AG04450 (cell line): ENCODE measurements at regions of chr1 and their contacts with region 1.

Region 1: DNA sequence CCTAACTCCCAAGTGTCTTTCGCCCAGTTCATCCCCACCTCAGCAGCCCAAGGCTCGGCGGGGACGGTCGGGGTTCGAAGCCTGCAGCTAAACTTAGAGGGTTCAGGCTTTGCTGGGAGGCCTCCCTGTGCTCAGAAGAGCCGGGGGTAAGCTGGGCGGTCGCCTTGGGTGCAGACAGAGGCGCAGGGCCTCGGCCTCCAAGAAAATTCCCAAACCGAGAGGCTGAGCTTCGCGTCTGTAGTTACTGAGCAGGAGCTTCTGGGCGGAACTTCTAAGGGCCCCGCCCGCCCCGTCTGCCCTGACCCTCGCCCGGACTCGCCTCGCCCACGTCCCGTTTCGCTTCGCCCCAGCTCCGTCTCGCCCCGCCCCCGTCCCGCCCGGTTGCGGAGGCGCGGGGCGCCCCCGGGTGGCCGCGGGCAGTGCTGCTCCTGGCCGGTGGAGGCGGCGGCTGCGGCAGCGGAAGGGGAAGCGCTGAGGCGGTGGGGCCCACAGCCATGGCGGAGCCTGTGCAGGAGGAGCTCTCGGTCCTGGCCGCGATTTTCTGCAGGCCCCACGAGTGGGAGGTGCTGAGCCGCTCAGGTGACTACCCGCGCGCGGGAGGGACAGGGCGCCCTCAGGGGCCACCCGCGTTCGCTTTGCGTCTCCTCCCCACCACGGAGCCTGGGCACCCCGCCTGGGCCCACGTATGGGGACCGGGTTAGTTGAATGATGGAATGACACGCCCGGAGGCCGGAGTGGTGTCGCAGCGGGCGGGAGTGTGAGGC is at the start of gene RWDD3:
- DNase-seq: peak; percentile 61
- H3K4me3 ChIP-seq: peak within 1 kb of the TSS; percentile 83
- H3K27ac ChIP-seq: peak within 1 kb of the TSS; percentile 50
- H3K27me3 ChIP-seq: no peaks in the 10 kb centered on the region
- CTCF ChIP-seq: peak; percentile 58
- polyA plus RNA-seq, gene RWDD3: 17.6 and 24.6 TPM in 2 replicates

Region 2: DNA sequence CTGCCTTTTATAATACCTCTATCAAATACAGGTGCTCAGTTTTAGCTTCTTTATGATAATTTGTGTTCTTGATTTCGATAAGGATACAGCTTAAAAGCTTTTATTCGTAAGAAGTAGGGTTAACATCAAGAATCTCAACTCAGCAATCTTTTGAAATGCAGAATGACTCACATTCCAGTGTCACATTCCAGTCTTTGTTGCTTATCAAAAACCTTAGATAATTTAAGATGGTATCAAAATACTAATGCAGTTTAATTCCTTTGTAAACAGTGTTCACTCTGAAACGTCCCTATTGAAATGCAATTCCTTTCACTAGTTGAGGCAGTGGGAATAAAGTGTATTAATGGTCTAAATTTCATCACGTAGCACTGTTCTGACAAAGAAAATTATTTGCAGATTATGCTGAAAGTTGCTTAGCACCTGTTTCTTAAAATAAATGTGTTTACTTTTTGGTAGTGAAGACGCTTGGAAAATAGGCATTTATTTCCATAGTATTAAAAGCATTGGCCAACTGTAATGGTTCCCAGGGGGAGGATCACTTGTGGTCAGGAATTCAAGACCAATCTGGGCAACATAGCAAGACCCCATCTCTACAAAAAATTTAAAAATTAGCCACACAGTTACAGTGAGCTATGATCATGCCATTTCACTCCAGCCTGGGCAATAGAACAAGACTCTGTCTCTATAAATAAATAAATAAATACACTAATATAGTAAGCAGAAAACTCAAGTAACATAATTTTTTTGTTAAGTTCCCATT is 296.9 kb before region 1 on chr1:
- CTCF ChIA-PET with region 1: no interaction called
- POLR2A ChIA-PET with region 1: no interaction called
- DNase-seq: no peak
- H3K4me3 ChIP-seq: no peak overlapping the region
- H3K27ac ChIP-seq: no peak overlapping the region
- H3K27me3 ChIP-seq: no peaks in the 10 kb centered on the region
- CTCF ChIP-seq: no peak

Region 3: GRCh38 chr1:95058974-95059373 is 174.9 kb before region 1 on chr1:
- CTCF ChIA-PET with region 1: interaction called, 11 read pairs
- POLR2A ChIA-PET with region 1: no interaction called
- DNase-seq: no peak
- H3K4me3 ChIP-seq: no peak overlapping the region
- H3K27ac ChIP-seq: no peak overlapping the region
- H3K27me3 ChIP-seq: no peaks in the 10 kb centered on the region
- CTCF ChIP-seq: no peak

Region 4: GRCh38 chr1:95084317-95085176 is 149.4 kb before region 1 on chr1:
- CTCF ChIA-PET with region 1: interaction called, 23 read pairs
- POLR2A ChIA-PET with region 1: interaction called, 3 read pairs
- DNase-seq: no peak
- H3K4me3 ChIP-seq: no peak overlapping the region
- H3K27ac ChIP-seq: no peak overlapping the region
- H3K27me3 ChIP-seq: peaks cover 6% of the 10 kb centered on the region
- CTCF ChIP-seq: peak; percentile 57

Region 5: DNA sequence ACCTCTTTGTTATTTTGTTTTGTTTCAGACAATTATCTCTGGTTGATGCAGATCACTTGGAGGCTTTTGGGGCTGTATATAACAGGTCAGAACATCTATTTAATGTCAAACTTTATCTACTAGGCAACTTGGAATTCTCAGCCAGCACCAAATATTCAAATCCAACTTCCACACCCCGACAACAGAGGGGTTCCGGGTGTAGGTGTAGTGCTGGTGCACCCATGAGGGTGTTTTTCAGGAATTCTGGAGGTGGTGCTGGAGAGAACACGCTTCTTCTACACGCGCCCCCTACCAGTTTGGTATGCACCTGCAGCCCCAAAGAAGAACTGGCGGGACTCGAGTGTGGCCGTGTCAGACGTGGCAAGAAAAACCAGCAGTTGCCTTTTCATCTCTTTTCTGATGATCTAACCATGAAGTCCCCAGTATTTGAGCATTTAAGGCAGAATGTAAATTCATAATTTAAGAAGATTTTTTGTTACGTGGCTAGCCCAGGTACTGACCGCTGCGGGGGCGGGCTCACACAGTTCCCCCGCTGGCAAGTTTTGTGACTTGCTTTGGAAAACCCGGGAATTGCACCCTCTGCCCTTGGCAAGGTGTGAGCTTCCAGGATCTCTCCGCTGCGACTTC is 117.2 kb before region 1 on chr1:
- CTCF ChIA-PET with region 1: interaction called, 24 read pairs
- POLR2A ChIA-PET with region 1: no interaction called
- DNase-seq: no peak
- H3K4me3 ChIP-seq: peak overlapping the region; percentile 66
- H3K27ac ChIP-seq: no peak overlapping the region
- H3K27me3 ChIP-seq: peaks cover 35% of the 10 kb centered on the region
- CTCF ChIP-seq: peak; percentile 49

Region 6: DNA sequence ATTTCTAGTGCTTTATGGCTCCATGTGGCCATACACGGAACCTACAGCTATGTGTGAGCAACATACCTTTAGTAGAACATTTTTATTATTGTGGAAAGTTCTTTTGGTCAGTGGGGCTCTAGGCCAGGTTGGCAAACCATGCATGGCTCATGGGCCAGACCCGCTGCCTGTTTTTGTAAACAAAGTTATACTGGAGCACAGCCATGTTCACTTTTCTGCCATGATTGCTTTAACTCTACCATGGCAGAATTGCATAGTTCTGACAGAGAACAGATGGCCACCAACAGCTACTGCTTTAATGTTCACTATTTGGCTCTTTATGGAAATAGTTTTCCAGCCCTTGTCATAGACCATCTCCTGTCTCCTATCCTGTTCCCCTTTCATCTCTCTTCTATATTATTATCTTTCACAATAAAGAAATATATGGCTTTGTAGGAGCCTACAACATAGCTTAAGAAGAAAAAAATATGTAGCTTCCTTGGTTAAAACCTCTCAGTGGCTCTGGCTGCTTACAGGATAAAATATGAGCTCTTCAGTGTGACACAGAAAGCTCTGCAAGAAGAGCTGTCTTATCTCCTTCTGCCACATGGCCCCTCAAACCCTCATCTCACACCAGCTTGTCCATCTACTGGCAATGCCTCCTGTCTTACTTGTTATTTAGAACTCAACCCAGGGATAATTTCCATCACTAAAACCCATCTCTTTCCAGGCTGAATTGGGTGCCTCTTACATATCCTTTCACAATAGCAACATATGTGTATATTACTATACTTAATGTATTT is 54.5 kb before region 1 on chr1:
- CTCF ChIA-PET with region 1: interaction called, 18 read pairs
- POLR2A ChIA-PET with region 1: no interaction called
- DNase-seq: no peak
- H3K4me3 ChIP-seq: no peak overlapping the region
- H3K27ac ChIP-seq: no peak overlapping the region
- H3K27me3 ChIP-seq: no peaks in the 10 kb centered on the region
- CTCF ChIP-seq: no peak

Region 7: DNA sequence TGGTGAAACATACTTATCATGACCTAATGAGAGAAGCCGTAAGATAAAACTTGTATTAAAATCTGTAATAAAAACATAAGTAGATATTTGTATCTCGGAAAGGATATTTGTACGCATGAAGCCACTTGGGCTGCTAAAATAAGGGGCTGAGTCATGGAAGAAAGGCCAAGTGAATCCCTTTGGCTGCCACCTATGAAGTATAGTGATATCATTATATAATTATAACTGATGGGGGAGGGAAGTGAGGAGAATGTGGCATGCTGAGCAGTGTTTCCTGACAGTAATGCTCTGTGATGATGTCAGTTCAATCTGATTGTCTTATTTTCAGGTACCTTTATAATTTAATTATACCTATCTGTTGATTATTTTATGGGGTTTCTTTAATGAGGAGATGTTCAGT is 13.7 kb after region 1 on chr1:
- CTCF ChIA-PET with region 1: interaction called, 55 read pairs
- POLR2A ChIA-PET with region 1: no interaction called
- DNase-seq: no peak
- H3K4me3 ChIP-seq: no peak overlapping the region
- H3K27ac ChIP-seq: no peak overlapping the region
- H3K27me3 ChIP-seq: no peaks in the 10 kb centered on the region
- CTCF ChIP-seq: no peak

Region 8: DNA sequence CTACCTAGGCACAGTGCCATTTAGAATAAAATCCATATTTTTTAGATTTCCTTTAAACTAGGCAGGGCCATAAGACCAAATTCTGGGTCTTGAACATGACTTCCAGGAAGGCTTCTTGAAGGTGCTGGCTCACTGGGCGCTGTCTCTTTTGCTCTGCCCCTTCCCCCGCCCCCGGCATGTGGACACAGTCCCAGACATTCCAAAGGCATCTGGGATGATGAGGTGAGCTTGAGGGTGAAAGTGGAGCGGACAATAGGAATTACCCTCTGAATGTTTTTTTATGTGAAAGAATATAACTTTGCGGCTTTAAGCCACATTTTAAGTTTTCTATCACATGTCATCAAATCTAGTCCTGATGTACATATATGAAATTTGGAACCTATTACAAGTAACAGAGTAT is 29.5 kb after region 1 on chr1:
- CTCF ChIA-PET with region 1: interaction called, 13 read pairs
- POLR2A ChIA-PET with region 1: no interaction called
- DNase-seq: no peak
- H3K4me3 ChIP-seq: no peak overlapping the region
- H3K27ac ChIP-seq: no peak overlapping the region
- H3K27me3 ChIP-seq: no peaks in the 10 kb centered on the region
- CTCF ChIP-seq: no peak

Region 9: DNA sequence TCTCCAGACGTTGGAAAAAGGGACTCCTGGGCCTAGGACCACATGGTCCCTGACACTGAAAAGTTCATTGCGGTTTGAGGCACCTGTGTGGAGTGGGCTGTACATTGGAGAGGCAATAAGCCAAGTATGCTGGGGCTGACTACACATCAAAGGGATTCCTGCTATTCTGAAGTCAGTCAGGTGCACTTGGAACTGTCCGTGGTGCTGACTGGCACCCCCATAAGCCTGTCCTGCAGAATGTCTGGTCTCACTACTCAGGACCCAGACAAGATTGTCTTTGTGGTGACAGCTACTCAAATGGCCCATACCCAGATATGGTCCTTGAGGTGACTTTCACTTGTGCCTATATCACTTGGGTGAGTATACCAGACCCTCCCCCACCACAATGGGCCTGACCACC is 150.6 kb after region 1 on chr1:
- CTCF ChIA-PET with region 1: no interaction called
- POLR2A ChIA-PET with region 1: no interaction called
- DNase-seq: no peak
- H3K4me3 ChIP-seq: no peak overlapping the region
- H3K27ac ChIP-seq: no peak overlapping the region
- H3K27me3 ChIP-seq: no peaks in the 10 kb centered on the region
- CTCF ChIP-seq: no peak